ENCODE measurements at regions of chr11 and their contacts with region 1.

Region 1: GRCh38 chr11:106076919-106077608 is at the start of gene KBTBD3:
- DNase-seq: peak; percentile 99
- ATAC-seq: peak; percentile 98
- H3K4me3 Mint-ChIP-seq: peak within 1 kb of the TSS; percentile 95
- H3K27ac Mint-ChIP-seq: peak within 1 kb of the TSS; percentile 97
- H3K4me1 Mint-ChIP-seq: peaks cover 37% of the 10 kb centered on the region
- H3K27me3 Mint-ChIP-seq: no peaks in the 10 kb centered on the region
- total RNA-seq, gene KBTBD3: 6.2 to 7.7 TPM

Region 2: DNA sequence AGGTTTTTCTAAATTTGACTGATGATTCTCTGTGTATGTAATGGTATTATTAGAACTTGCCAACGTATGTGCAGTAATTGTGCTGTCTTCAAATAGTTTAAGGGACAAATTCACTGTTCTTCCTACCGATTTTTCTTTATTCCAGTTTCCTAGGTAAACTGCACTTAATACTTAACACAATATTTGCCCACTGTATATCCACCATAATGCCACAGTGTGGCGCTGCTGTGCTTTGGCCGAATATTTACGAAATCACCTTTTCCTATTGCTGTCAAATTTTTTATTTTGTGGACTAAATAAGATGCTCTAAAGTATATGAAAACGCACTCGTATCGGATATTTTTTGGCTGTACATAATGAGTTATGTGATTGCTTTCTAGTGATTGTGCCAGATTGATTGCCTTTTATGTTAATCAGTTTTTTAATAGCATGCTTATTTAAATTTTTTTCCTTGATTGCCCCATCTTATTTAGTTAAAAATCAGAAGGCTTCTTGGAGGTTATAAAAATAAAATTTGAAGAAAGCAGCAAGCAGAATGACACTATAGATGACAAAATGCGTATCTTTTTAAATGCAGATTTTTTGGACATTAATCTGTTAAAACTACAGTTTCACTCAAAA is 10.9 kb after region 1 on chr11:
- CTCF ChIA-PET with region 1: interaction called, 18 read pairs
- POLR2A ChIA-PET with region 1: interaction called, 6 read pairs
- DNase-seq: peak; percentile 47
- ATAC-seq: no peak
- H3K4me3 Mint-ChIP-seq: no peak overlapping the region
- H3K27ac Mint-ChIP-seq: no peak overlapping the region
- H3K4me1 Mint-ChIP-seq: peaks cover 34% of the 10 kb centered on the region
- H3K27me3 Mint-ChIP-seq: no peaks in the 10 kb centered on the region

Region 3: GRCh38 chr11:106105986-106106385 is 28.9 kb after region 1 on chr11:
- CTCF ChIA-PET with region 1: no interaction called
- POLR2A ChIA-PET with region 1: no interaction called
- DNase-seq: no peak
- ATAC-seq: no peak
- H3K4me3 Mint-ChIP-seq: no peak overlapping the region
- H3K27ac Mint-ChIP-seq: no peak overlapping the region
- H3K4me1 Mint-ChIP-seq: no peaks in the 10 kb centered on the region
- H3K27me3 Mint-ChIP-seq: no peaks in the 10 kb centered on the region

Region 4: GRCh38 chr11:106331176-106331575 is 254.1 kb after region 1 on chr11:
- CTCF ChIA-PET with region 1: no interaction called
- POLR2A ChIA-PET with region 1: no interaction called
- DNase-seq: no peak
- ATAC-seq: no peak
- H3K4me3 Mint-ChIP-seq: no peak overlapping the region
- H3K27ac Mint-ChIP-seq: no peak overlapping the region
- H3K4me1 Mint-ChIP-seq: no peaks in the 10 kb centered on the region
- H3K27me3 Mint-ChIP-seq: no peaks in the 10 kb centered on the region